Activated naive CD4-positive, alpha-beta T cell treated with anti-CD3 and anti-CD28 coated beads for 36 hours (primary cell): ENCODE measurements at regions of chr11 and their contacts with region 1.

Region 1: DNA sequence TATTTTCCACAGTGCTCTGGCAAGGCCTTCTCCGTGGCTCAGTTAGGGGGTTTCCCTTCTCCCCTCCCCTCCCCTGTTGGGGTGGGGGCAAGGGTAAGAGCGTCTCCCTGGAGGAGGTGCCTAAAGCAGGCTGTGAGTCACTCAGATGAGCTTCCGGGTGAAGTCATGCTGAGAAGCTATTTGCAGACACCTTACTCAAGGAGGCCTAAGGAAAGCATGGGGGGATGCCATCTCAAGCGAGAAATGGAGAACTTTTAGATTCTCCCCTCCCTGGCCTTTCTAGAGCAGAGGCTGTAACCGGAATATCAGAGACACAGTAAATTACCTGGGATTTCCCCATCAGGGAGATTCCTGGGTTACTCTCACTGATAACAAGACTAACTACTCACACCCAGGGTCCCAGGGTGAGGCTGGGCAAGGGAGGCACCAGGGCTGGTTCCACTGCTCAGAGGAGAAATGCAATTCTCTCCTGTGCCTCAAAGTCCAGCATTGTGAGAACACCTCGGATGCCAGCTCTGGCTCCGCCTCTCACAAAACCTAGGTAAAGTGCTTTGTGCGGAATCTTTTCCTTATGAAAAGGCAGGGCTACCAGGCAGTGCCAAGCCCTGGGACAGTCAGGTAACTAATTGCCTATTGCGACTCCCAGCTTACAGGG is 123.6 kb downstream of the ABTB2 start:
- DNase-seq: peak; percentile 93
- H3K4me3 Mint-ChIP-seq: no peak overlapping the region
- H3K27ac Mint-ChIP-seq: peak overlapping the region; percentile 83
- H3K4me1 Mint-ChIP-seq: peaks cover 57% of the 10 kb centered on the region
- H3K27me3 Mint-ChIP-seq: no peaks in the 10 kb centered on the region

Region 2: GRCh38 chr11:33893711-33894397 is 340.4 kb before region 1 on chr11:
- CTCF ChIA-PET with region 1: no interaction called
- intact Hi-C with region 1: loop called (anchors 1 kb)
- DNase-seq: peak; percentile 87
- H3K4me3 Mint-ChIP-seq: peak overlapping the region; percentile 57
- H3K27ac Mint-ChIP-seq: peak overlapping the region; percentile 33
- H3K4me1 Mint-ChIP-seq: peaks cover 47% of the 10 kb centered on the region
- H3K27me3 Mint-ChIP-seq: peaks cover 47% of the 10 kb centered on the region

Region 3: GRCh38 chr11:34105079-34105956 is 128.9 kb before region 1 on chr11 and contains the start of gene NAT10:
- CTCF ChIA-PET with region 1: no interaction called
- intact Hi-C with region 1: loop called (anchors 1 kb)
- DNase-seq: peak; percentile 98
- H3K4me3 Mint-ChIP-seq: peak within 1 kb of the TSS; percentile 94
- H3K27ac Mint-ChIP-seq: peak within 1 kb of the TSS; percentile 94
- H3K4me1 Mint-ChIP-seq: peaks cover 51% of the 10 kb centered on the region
- H3K27me3 Mint-ChIP-seq: no peaks in the 10 kb centered on the region
- total RNA-seq, gene NAT10: 91.0 to 93.3 TPM

Region 4: GRCh38 chr11:34214961-34215805 is 19.0 kb before region 1 on chr11:
- CTCF ChIA-PET with region 1: interaction called, 4 read pairs
- intact Hi-C with region 1: loop called (anchors 1 kb)
- DNase-seq: peak; percentile 96
- H3K4me3 Mint-ChIP-seq: peak overlapping the region; percentile 28
- H3K27ac Mint-ChIP-seq: peak overlapping the region; percentile 83
- H3K4me1 Mint-ChIP-seq: peaks cover 29% of the 10 kb centered on the region
- H3K27me3 Mint-ChIP-seq: no peaks in the 10 kb centered on the region

Region 5: DNA sequence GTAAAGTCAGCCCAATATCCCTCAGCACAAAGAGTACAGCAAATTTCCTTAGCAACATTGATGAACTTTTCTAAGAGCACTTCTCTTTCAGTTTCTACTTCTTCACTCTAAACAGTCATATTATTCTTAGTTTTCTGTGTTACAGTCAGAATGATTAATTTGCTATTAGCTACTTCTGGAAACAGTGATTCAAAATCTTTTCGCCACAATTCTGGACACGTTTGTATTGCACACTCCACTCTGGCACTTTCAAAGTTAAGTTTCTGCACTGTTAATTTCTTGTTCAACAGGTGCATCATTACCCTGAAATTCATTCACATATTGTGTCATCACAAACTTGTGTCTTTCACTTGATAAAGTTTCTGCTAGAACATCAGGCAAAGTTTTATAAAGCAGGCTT is 101.1 kb after region 1 on chr11:
- CTCF ChIA-PET with region 1: no interaction called
- intact Hi-C with region 1: loop called (anchors 1 kb)
- DNase-seq: peak; percentile 16
- H3K4me3 Mint-ChIP-seq: no peak overlapping the region
- H3K27ac Mint-ChIP-seq: no peak overlapping the region
- H3K4me1 Mint-ChIP-seq: peaks cover 33% of the 10 kb centered on the region
- H3K27me3 Mint-ChIP-seq: peaks cover 12% of the 10 kb centered on the region

Region 6: DNA sequence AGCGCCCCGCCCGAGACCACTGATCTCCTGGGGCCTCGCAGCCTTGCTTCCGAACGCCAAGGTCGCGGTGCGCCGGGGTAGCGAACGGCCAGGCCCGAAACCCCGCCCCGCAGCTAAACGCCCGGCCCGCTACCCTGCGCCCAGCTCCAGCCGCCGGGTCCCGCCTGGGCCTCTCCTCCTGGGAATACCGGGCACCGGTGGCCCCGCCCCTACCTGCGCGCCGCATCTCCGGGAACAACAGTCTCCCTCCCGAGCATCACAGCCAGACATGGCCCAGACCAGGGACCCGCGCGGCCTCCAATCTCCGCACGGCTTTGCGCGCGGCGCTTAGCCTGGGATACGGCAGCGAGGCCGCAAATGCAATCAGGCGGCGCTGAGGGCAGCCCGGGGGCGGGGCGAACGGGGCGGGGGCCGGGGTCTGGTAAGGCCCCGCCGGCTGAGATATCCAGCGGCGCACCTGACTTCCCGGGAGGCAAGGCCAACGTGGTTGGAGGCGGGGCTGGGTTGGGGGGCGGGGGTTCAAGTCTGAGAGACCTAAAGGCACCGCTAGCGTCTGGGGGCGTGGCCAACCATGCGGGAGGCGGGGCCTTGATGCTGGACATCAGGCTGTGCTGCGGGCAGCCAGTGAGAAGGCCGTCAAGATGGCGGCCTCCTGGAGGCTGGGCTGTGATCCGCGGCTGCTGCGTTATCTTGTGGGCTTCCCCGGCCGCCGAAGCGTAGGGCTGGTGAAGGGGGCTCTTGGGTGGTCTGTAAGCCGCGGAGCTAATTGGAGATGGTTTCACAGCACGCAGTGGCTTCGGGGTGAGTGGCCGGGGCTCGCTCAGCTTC is 682.0 kb after region 1 on chr11 and contains the starts of genes APIP and PDHX:
- CTCF ChIA-PET with region 1: no interaction called
- intact Hi-C with region 1: loop called (anchors 10 kb)
- DNase-seq: peak; percentile 98
- H3K4me3 Mint-ChIP-seq: peak within 1 kb of the TSS; percentile 99
- H3K27ac Mint-ChIP-seq: peak within 1 kb of the TSS; percentile 96
- H3K4me1 Mint-ChIP-seq: peaks cover 44% of the 10 kb centered on the region
- H3K27me3 Mint-ChIP-seq: no peaks in the 10 kb centered on the region
- total RNA-seq, gene APIP: 42.4 to 42.5 TPM
- total RNA-seq, gene PDHX: 38.2 to 40.9 TPM

Region 7: GRCh38 chr11:35337136-35337918 is 1103.1 kb after region 1 on chr11:
- CTCF ChIA-PET with region 1: no interaction called
- intact Hi-C with region 1: loop called (anchors 10 kb)
- DNase-seq: peak; percentile 65
- H3K4me3 Mint-ChIP-seq: no peak overlapping the region
- H3K27ac Mint-ChIP-seq: peak overlapping the region; percentile 82
- H3K4me1 Mint-ChIP-seq: peaks cover 41% of the 10 kb centered on the region
- H3K27me3 Mint-ChIP-seq: no peaks in the 10 kb centered on the region